ENCODE measurements at regions of chr1 and their contacts with region 1.

Region 1: DNA sequence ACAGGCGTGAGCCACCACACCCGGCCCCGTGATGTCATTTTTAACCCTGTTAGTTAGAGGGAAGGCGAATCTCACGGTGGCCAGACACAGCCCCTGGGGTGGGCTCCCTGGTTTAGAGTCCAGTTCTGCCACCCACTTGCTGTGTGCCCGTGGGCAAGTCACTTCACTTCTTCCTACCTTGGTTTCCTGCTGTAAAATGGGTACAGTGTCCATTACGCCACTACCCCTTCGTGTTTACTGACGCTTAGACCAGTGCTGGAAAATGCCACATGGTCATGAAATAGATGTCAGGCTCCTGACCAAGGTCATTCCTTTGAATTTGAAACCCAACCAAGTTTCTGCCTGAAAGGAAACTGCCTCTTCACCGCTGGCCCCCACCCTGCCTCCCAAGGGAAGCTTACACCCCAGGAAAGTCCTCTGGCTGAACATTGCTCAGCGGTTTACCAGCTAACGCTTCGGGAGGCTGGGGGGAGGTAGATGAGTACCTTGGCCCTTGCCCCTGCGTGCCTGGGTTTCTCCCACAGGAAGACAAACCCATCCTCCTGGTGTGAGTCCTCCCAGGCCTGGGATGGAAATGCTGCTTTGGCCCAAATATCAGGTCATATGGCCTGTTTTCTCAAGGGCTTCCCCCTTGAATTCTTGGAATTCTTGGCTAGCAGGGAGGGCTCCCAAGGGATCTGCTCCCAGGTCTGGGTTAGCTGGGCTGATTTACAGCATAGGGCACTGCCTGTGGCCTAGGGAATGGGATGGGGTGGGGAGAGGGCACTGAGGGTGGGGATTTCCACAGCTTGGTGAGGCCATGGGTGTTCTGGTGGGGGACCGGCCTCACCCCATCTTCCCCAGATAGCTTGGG is 7.6 kb upstream of the AADACL4 start:
- DNase-seq: no peak
- H3K4me3 ChIP-seq: no peak overlapping the region
- H3K27ac ChIP-seq: no peak overlapping the region
- H3K4me1 ChIP-seq: no peaks in the 10 kb centered on the region
- H3K27me3 ChIP-seq: no peaks in the 10 kb centered on the region
- CTCF ChIP-seq: no peak

Region 2: GRCh38 chr1:12275369-12275768 is 361.0 kb before region 1 on chr1:
- CTCF ChIA-PET with region 1: no interaction called
- dilution Hi-C with region 1: loop called (anchors 10 kb)
- in situ Hi-C with region 1: no loop called
- intact Hi-C with region 1: no loop called
- DNase-seq: no peak
- H3K4me3 ChIP-seq: no peak overlapping the region
- H3K27ac ChIP-seq: no peak overlapping the region
- H3K4me1 ChIP-seq: no peaks in the 10 kb centered on the region
- H3K27me3 ChIP-seq: no peaks in the 10 kb centered on the region
- CTCF ChIP-seq: peak; percentile 66 to 71

Region 3: GRCh38 chr1:12386130-12386529 is 250.2 kb before region 1 on chr1:
- CTCF ChIA-PET with region 1: no interaction called
- dilution Hi-C with region 1: loop called (anchors 10 kb)
- in situ Hi-C with region 1: no loop called
- intact Hi-C with region 1: no loop called
- DNase-seq: peak; percentile 84
- H3K4me3 ChIP-seq: no peak overlapping the region
- H3K27ac ChIP-seq: peak overlapping the region; percentile 63
- H3K4me1 ChIP-seq: peaks cover 33% of the 10 kb centered on the region
- H3K27me3 ChIP-seq: no peaks in the 10 kb centered on the region
- CTCF ChIP-seq: no peak

Region 4: GRCh38 chr1:12556368-12556930 is 79.9 kb before region 1 on chr1:
- CTCF ChIA-PET with region 1: no interaction called
- dilution Hi-C with region 1: no loop called
- in situ Hi-C with region 1: no loop called
- intact Hi-C with region 1: no loop called
- DNase-seq: no peak
- H3K4me3 ChIP-seq: no peak overlapping the region
- H3K27ac ChIP-seq: no peak overlapping the region
- H3K4me1 ChIP-seq: no peaks in the 10 kb centered on the region
- H3K27me3 ChIP-seq: peaks cover 4% of the 10 kb centered on the region
- CTCF ChIP-seq: no peak

Region 5: GRCh38 chr1:12709091-12709491 is 72.8 kb after region 1 on chr1:
- CTCF ChIA-PET with region 1: no interaction called
- dilution Hi-C with region 1: no loop called
- in situ Hi-C with region 1: no loop called
- intact Hi-C with region 1: no loop called
- DNase-seq: peak; percentile 12
- H3K4me3 ChIP-seq: no peak overlapping the region
- H3K27ac ChIP-seq: no peak overlapping the region
- H3K4me1 ChIP-seq: no peaks in the 10 kb centered on the region
- H3K27me3 ChIP-seq: no peaks in the 10 kb centered on the region
- CTCF ChIP-seq: no peak

Measured in mammary epithelial cell (primary cell).